ENCODE measurements at regions of chr9 and their contacts with region 1.

Region 1: DNA sequence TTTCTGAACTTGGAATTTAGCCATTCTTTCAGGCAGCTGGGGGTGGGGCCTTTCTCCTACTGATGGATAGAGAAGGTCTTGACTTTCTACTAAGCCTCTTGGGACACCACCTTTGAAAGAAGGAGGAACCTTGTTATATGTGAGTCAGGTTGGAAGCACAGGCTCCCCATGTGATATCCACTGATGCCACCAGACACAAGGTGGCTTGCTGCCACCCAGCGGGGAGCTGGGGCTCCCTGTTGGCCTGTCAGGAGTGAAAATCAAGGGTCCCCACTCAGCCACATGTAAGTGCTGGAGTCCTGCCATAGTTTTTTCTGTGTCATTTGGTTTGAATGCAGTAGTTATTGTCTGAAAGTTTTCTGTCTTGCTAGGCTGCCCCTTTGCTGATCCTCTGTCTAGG is 252.4 kb upstream of the NFIL3 start:
- DNase-seq: peak; percentile 15
- ATAC-seq: peak; percentile 88
- H3K4me3 ChIP-seq: no peak overlapping the region
- H3K27ac ChIP-seq: no peak overlapping the region
- H3K4me1 ChIP-seq: no peaks in the 10 kb centered on the region
- H3K27me3 ChIP-seq: no peaks in the 10 kb centered on the region; a peak in 2 of 5 replicates
- CTCF ChIP-seq: peak; percentile 72
- EP300 ChIP-seq: no peak
- POLR2A ChIP-seq: no peak
- RAD21 ChIP-seq: no peak

Region 2: GRCh38 chr9:90607701-90608516 is 1068.1 kb before region 1 on chr9:
- CTCF ChIA-PET with region 1: no interaction called
- POLR2A ChIA-PET with region 1: no interaction called
- in situ Hi-C with region 1: no loop called
- intact Hi-C with region 1: no loop called
- DNase-seq: no peak
- ATAC-seq: no peak
- H3K4me3 ChIP-seq: no peak overlapping the region
- H3K27ac ChIP-seq: no peak overlapping the region
- H3K4me1 ChIP-seq: no peaks in the 10 kb centered on the region
- H3K27me3 ChIP-seq: peaks cover 0 to 6% of the 10 kb centered on the region in 2 experiments; a peak in 1 of 5 replicates
- CTCF ChIP-seq: no peak
- EP300 ChIP-seq: no peak
- POLR2A ChIP-seq: no peak
- RAD21 ChIP-seq: no peak

Region 3: GRCh38 chr9:90983394-90983793 is 692.7 kb before region 1 on chr9:
- CTCF ChIA-PET with region 1: interaction called, 5 read pairs
- POLR2A ChIA-PET with region 1: no interaction called
- in situ Hi-C with region 1: no loop called
- intact Hi-C with region 1: loop called (anchors 5 kb)
- DNase-seq: no peak
- ATAC-seq: peak; percentile 42; the same call in 1 of the 3 replicates
- H3K4me3 ChIP-seq: no peak overlapping the region
- H3K27ac ChIP-seq: no peak overlapping the region
- H3K4me1 ChIP-seq: peaks cover 5% of the 10 kb centered on the region; the same call in 1 of the 2 replicates
- H3K27me3 ChIP-seq: no peaks in the 10 kb centered on the region; a peak in 1 of 5 replicates
- CTCF ChIP-seq: no peak
- EP300 ChIP-seq: no peak
- POLR2A ChIP-seq: no peak
- RAD21 ChIP-seq: no peak

Region 4: GRCh38 chr9:91433180-91433579 is 242.9 kb before region 1 on chr9:
- CTCF ChIA-PET with region 1: no interaction called
- POLR2A ChIA-PET with region 1: no interaction called
- in situ Hi-C with region 1: no loop called
- intact Hi-C with region 1: loop called (anchors 10 kb)
- DNase-seq: peak; percentile 71
- ATAC-seq: peak; percentile 82
- H3K4me3 ChIP-seq: no peak overlapping the region
- H3K27ac ChIP-seq: no peak overlapping the region
- H3K4me1 ChIP-seq: peaks cover 4% of the 10 kb centered on the region; the same call in 1 of the 2 replicates
- H3K27me3 ChIP-seq: peaks cover 0 to 6% of the 10 kb centered on the region in 2 experiments; a peak in 1 of 5 replicates
- CTCF ChIP-seq: peak; percentile 76
- EP300 ChIP-seq: 0 out of 4 replicates have a peak, but pooled peaks of 1 of the 2 experiments have one; percentile 9
- POLR2A ChIP-seq: no peak
- RAD21 ChIP-seq: 0 out of 2 replicates have a peak, but pooled peaks have one; percentile 39